ENCODE measurements at regions of chr4 and their contacts with region 1.

Region 1: GRCh38 chr4:15479089-15479912 is 9.6 kb downstream of the CC2D2A start:
- DNase-seq: peak; percentile 81 to 91
- H3K4me3 ChIP-seq: peak overlapping the region; percentile 44
- H3K4me1 ChIP-seq: peaks cover 6% of the 10 kb centered on the region
- H3K27me3 ChIP-seq: no peaks in the 10 kb centered on the region

Region 2: GRCh38 chr4:15043226-15043625 is 436.1 kb before region 1 on chr4:
- in situ Hi-C with region 1: no loop called
- DNase-seq: no peak
- H3K4me3 ChIP-seq: no peak overlapping the region
- H3K4me1 ChIP-seq: no peaks in the 10 kb centered on the region
- H3K27me3 ChIP-seq: no peaks in the 10 kb centered on the region; the same call in 1 of the 2 replicates

Region 3: GRCh38 chr4:15649914-15650545 is 170.7 kb after region 1 on chr4:
- in situ Hi-C with region 1: loop called (anchors 5 kb)
- DNase-seq: peak; percentile 70 to 71
- H3K4me3 ChIP-seq: no peak overlapping the region
- H3K4me1 ChIP-seq: peaks cover 32% of the 10 kb centered on the region
- H3K27me3 ChIP-seq: no peaks in the 10 kb centered on the region

Region 4: DNA sequence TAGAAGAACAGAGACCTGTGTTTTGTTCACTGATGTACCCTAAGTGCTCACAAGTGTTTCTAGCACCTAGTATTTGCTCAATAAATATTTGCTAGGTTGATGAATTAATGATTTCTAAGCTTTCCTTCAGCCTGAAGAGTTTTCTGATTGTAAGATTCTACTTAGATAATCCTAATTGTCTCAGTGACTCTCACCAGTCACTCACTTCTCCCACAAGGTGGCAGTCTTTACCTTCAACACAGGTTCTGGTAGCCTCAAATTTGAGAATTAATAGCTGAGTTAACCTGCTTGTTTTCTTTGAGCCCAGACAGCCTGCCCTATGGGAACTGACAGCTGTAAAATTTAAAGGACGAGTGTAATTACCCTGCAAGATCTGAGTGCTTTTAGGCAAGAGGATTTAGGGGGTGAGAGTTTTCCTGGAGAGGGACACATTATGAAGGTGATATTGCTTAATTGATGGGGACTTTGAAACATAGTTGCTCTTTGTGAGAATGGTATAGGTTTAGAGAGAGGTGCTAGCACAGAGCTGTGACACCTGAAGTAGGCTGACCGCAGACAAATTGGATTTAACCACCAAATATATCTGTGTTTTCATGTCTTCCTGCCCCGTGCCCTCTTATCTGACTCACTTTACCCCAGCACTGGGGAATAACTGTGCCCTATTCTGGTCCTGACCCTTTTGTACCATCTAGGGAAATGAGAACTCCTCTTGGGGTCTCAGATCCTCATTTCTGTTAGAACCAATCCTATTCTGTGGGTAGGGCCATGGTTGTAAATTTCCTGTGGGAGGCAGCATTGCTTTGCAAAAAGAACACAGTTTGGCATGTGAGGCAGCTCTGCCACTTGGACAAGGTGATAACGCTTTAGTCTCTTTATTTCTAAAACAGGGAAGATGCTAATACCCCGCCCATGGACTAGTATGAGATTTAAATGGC is 326.5 kb after region 1 on chr4:
- in situ Hi-C with region 1: loop called (anchors 10 kb)
- DNase-seq: peak; percentile 51 to 74
- H3K4me3 ChIP-seq: no peak overlapping the region
- H3K4me1 ChIP-seq: no peaks in the 10 kb centered on the region
- H3K27me3 ChIP-seq: peaks cover 10% of the 10 kb centered on the region; the same call in 1 of the 2 replicates

Region 5: DNA sequence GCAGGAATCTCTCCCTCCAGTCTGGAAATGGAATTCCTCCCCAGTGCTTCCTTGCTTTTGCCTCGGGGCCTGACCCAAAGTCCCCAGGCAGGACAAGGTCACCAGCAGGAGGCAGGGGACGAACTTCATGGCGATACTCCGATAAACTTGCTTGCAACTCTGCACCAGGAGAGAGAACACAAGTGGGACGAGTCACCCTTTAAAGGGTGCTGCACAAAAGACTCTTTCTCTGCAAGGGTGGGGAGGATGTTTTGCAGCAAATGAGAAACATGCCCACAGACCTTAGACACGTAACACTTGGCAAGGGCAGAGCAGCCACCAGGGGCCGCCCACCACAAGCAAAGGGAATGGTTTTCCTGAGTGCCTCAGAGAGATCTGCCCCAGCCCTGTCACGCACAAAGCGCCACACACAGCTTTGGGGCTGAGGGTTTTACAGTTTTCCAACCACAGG is 483.7 kb after region 1 on chr4 and contains the start of gene FGFBP2:
- in situ Hi-C with region 1: loop called (anchors 10 kb)
- DNase-seq: peak in 1 of 2 experiments; percentile 51
- H3K4me3 ChIP-seq: no peak within 1 kb of the TSS
- H3K4me1 ChIP-seq: no peaks in the 10 kb centered on the region
- H3K27me3 ChIP-seq: no peaks in the 10 kb centered on the region

Region 6: DNA sequence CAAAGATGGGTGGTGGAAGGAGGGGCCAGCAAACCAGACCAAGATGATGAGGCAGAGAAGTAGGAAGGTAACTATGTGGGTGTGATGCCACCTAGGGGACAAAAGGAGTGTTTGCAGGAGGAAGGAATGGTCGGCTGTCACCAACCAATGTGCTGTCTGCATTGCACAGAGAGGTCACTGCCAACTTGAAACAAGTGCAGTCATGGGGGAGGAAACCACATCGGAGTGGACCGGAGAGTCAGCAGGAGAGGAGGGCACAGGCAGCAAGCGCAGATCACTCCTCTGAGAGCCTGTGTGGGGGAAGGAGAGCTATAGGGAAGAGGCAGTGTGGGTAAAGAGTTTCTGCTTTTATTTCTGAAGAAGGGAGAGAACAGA is 522.2 kb after region 1 on chr4:
- in situ Hi-C with region 1: loop called (anchors 10 kb)
- DNase-seq: peak; percentile 71 to 73
- H3K4me3 ChIP-seq: no peak overlapping the region
- H3K4me1 ChIP-seq: no peaks in the 10 kb centered on the region
- H3K27me3 ChIP-seq: peaks cover 3% of the 10 kb centered on the region

Region 7: DNA sequence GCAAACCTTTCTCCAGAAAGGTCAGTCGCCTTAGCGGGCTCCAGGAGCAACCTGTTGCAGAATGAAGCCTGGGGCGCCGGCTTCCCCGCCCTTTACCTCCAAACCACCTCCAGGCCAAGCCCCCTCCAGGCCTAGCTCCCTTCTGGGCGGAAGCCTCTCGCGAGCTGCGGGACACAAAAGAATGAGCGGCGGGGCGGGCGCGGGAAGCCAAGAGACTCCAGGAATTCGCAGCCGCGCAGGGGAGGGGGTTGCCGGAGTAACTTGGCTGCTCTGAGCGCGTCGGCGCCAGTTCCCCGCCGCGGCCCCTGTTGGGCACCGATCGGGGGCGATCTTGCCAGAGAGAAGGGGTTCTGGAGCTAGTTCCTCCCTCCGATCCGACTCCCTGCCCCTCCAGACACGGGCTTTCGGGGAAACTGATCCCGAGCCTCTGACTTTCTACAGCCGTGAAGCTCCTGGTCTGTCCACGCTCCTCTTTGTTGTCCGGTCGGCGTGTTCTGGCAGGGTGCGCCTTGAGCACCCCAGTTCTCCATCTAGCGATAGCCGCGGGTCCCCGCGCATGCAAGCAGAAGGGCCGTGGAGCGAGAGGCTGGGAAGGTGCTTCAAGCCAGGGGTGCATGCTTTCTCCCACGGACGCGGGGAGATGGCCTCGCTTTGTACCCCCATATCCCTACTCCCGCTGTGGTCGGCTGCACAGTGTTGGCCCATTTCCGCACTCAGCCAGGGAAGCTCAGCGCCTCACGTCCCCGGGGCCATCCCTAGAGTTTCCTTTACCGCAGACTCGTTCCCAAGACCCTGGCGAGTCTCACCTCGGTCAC is 603.3 kb after region 1 on chr4:
- in situ Hi-C with region 1: no loop called
- DNase-seq: peak; percentile 22 to 84
- H3K4me3 ChIP-seq: peak overlapping the region; percentile 30
- H3K4me1 ChIP-seq: peaks cover 12% of the 10 kb centered on the region
- H3K27me3 ChIP-seq: peaks cover 61% of the 10 kb centered on the region

Region 8: GRCh38 chr4:16264798-16265197 is 785.5 kb after region 1 on chr4:
- in situ Hi-C with region 1: loop called (anchors 25 kb)
- DNase-seq: peak in 1 of 2 experiments; percentile 59
- H3K4me3 ChIP-seq: no peak overlapping the region
- H3K4me1 ChIP-seq: no peaks in the 10 kb centered on the region
- H3K27me3 ChIP-seq: peaks cover 25% of the 10 kb centered on the region

Measured in HAP-1 (cell line).